ENCODE measurements at regions of chr4 and their contacts with region 1.

Region 1: DNA sequence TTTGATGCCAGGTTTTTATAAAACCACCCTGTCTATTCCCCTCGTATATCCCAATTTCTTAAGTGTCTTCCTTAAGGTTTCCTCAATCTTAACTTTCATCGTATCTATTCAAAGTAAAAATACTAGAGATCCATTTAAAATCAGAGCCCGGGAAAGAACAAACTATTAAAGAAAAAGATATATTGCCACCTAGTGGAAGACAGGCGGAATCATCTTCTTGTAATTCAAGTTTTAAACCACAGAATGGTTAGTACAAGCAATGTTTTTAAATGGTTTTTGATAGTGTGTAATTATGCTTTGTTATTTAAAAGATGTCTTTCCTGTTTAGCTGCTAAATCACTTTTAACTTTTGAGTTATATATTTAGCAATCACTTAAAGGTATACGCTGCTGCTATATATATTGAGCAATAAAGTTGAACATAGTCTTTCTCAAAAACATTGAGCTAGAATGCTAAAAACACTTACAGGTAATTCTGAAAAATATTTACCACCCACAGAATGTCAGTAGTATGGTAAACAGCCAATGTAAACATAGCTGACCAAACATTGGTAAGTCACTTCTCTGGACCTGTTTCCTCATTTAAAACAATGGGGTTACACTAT is 18.2 kb downstream of the PRDM8 start:
- DNase-seq: no peak
- H3K4me3 ChIP-seq: no peak overlapping the region
- H3K27ac ChIP-seq: no peak overlapping the region
- H3K4me1 ChIP-seq: no peaks in the 10 kb centered on the region
- H3K27me3 ChIP-seq: peaks cover 3% of the 10 kb centered on the region
- CTCF ChIP-seq: peak; percentile 19 to 67 (median 52)
- POLR2A ChIP-seq: no peak

Region 2: DNA sequence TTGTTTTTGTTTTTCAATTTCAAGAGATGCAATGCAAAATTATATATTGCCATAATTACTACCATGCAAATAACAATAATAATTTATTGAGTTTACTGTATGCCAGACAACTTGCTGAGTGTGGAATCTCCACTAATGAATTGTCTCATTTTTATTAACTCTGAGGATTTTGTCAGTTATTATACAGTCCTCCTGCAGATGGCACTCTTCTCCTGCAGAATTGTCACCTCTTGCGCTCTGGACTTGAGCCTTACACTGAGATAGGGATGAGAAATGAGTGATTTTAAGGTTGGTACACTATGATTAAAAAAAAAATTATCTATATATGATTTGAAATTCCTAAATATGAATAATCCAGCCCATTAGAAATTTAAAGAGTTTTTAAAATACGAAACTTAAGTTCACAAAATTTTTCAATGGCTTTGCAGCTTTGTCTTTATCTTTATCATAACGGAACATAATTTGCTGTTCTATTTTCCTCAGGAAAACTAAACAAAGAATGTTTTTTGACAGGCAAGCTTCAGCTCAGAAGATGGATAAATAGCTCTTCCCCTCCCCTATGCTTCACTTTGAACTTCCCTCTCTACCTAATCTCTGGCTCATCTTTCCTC is 1263.6 kb before region 1 on chr4:
- intact Hi-C with region 1: loop called (anchors 10 kb)
- DNase-seq: peak in 1 of 2 donors; percentile 16
- H3K4me3 ChIP-seq: no peak overlapping the region
- H3K27ac ChIP-seq: no peak overlapping the region
- H3K4me1 ChIP-seq: no peaks in the 10 kb centered on the region
- H3K27me3 ChIP-seq: no peaks in the 10 kb centered on the region
- CTCF ChIP-seq: peak; percentile 55 to 69 (median 64)
- POLR2A ChIP-seq: no peak

Measured in thyroid gland (tissue), 4 donors.